Activated naive CD4-positive, alpha-beta T cell treated with anti-CD3 and anti-CD28 coated beads for 36 hours (primary cell): ENCODE measurements at regions of chr12 and their contacts with region 1.

Region 1: DNA sequence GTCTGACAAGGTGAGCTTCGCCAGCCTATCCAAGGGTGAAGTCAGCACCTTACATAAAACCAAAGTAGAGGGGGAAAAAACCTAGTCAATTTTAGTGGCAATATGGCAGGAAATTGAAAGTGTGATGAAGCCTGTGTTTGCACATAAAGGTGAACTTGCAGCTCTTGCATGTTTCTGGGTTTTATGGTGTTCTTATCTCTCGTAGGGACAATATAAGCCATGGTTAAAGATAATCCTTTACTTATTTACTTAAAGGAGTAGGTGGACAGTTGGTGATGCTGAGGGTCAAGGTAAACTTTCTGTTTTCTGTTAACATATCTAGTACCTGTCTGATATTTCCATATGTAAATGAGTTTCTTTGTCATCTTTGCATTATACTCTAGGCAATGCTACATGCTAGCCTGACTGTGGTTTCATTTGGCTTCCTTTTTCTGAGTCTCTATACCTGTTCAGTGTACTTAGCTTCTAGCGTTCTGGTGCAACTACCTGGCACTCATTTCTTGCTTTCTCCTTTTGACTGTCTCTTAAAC is 32.8 kb downstream of the CCDC91 start:
- DNase-seq: peak; percentile 52
- H3K4me3 Mint-ChIP-seq: peak overlapping the region; percentile 48
- H3K27ac Mint-ChIP-seq: peak overlapping the region; percentile 87
- H3K4me1 Mint-ChIP-seq: peaks cover 56% of the 10 kb centered on the region
- H3K27me3 Mint-ChIP-seq: no peaks in the 10 kb centered on the region

Region 2: DNA sequence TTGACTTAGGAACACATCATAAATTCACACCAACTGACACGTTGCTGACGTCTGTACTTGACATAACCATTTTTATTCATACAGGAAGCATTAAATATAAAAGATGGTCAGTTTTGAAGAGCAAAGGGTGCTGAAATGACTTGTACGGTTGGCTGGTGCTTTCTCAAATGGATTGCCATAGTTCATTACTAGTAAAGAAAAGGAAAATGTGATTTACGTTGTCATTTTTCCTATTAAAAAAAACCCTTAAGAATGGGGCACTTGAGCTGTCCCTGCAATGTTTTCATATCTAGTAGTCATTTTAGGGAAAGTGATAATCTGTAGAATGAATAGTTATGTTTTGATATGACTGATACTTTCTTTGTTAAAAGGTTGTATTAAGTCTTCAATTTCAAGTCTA is 420.6 kb before region 1 on chr12:
- CTCF ChIA-PET with region 1: no interaction called
- intact Hi-C with region 1: loop called (anchors 1 kb)
- DNase-seq: peak; percentile 49
- H3K4me3 Mint-ChIP-seq: no peak overlapping the region
- H3K27ac Mint-ChIP-seq: peak overlapping the region; percentile 85
- H3K4me1 Mint-ChIP-seq: peaks cover 59% of the 10 kb centered on the region
- H3K27me3 Mint-ChIP-seq: peaks cover 4% of the 10 kb centered on the region

Region 3: DNA sequence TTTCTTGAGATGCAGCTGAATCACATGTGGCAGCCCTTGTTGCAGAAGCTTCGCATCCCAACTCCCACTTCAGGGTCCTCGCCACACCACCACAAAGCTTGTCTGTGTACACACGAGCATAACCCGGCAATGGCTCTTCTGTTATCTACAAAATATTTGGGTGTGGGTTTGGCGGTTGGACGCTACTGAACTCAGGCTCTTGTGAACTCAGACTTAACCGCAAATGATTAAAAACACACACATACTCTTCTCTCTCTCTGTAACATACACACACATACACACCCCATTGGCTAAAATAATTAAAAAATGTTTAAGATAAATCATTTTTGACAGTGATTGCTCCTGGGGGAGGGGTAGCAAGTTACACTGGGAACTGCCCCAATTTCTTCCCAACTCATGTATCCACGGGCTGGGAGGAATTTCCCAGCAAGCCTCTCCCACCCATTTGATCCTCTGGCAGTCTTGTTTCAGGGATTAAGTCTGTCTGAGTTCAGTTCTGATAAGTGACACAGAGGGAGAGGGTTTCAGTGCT is 379.3 kb before region 1 on chr12:
- CTCF ChIA-PET with region 1: no interaction called
- intact Hi-C with region 1: no loop called
- DNase-seq: no peak
- H3K4me3 Mint-ChIP-seq: no peak overlapping the region
- H3K27ac Mint-ChIP-seq: no peak overlapping the region
- H3K4me1 Mint-ChIP-seq: no peaks in the 10 kb centered on the region
- H3K27me3 Mint-ChIP-seq: peaks cover 5% of the 10 kb centered on the region

Region 4: DNA sequence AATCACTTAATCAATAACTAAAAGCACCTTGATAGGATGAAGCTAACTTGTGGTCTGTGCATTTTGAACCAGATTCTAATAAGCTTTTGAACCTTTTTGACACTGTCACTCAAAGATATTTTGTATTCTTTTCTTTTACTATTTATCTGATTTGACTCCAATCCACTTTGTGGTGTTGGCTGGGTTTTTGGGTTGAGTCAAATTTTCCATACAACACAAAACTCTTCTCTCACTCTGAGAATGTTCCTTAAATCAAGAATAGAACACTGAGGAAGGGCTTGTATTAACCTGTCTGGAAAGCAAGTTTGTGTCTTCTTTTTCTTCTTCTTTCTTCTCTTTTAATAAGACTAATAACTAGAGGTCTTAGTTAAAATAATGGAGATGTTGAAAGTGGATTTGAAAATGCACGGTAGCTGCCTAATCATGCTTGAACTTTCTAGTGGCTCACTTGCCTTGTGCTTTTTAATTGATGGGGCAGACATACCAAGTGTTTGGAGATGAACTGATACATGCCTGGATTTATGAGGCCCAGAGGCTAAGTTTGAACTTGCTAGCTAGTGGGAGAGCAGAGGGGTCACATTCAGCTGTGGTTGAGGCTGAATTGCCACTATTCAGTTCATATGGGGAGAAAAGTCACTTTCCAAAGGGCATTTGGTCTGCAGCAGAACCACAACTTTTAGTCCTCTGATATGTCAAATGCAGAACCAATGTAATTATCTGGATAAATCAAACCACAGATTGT is 157.0 kb before region 1 on chr12:
- CTCF ChIA-PET with region 1: no interaction called
- intact Hi-C with region 1: loop called (anchors 2 kb)
- DNase-seq: peak; percentile 17
- H3K4me3 Mint-ChIP-seq: no peak overlapping the region
- H3K27ac Mint-ChIP-seq: no peak overlapping the region
- H3K4me1 Mint-ChIP-seq: peaks cover 18% of the 10 kb centered on the region
- H3K27me3 Mint-ChIP-seq: peaks cover 6% of the 10 kb centered on the region

Region 5: GRCh38 chr12:28079539-28079938 is 143.6 kb before region 1 on chr12:
- CTCF ChIA-PET with region 1: no interaction called
- intact Hi-C with region 1: loop called (anchors 1 kb)
- DNase-seq: no peak
- H3K4me3 Mint-ChIP-seq: no peak overlapping the region
- H3K27ac Mint-ChIP-seq: no peak overlapping the region
- H3K4me1 Mint-ChIP-seq: peaks cover 8% of the 10 kb centered on the region
- H3K27me3 Mint-ChIP-seq: peaks cover 8% of the 10 kb centered on the region

Region 6: GRCh38 chr12:28177461-28177860 is 45.6 kb before region 1 on chr12:
- CTCF ChIA-PET with region 1: no interaction called
- intact Hi-C with region 1: no loop called
- DNase-seq: no peak
- H3K4me3 Mint-ChIP-seq: no peak overlapping the region
- H3K27ac Mint-ChIP-seq: no peak overlapping the region
- H3K4me1 Mint-ChIP-seq: no peaks in the 10 kb centered on the region
- H3K27me3 Mint-ChIP-seq: no peaks in the 10 kb centered on the region

Region 7: DNA sequence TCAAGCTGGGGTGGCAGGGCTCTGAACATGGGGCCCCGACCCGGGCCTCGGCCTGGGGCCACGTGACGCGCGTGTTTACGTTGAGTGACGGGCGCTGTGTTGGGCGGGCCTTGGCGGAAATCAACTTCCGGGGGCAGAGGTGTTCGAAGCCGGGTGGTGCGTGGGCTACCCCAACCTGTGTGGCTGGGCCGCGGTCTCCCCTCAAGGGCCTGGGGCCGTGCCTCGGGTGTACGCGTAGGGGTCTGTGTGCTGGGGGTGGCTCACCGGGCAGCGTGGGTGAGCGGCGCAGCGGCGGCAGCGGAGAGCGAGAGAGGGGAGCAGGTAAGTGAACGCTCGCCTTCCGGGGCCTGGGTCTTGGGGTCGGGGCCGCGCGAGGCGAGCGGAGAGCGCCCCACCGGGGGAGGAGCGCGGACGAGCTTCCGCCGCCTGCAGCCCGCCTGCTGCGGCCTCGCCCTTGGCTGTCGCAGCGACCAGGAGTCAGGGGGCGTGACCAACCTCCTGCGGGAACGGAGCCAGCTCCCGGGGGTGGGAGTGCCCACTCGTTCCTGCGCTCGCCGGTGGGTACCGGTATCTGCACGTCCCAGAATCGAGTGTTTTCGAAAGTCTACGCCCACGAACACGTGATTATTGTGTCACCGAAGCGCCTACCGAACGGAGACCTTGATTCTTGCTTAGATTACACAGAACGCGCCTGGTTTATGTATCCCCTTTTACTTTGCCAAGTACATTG is 32.6 kb before region 1 on chr12 and contains the start of gene CCDC91:
- CTCF ChIA-PET with region 1: interaction called, 3 read pairs
- intact Hi-C with region 1: loop called (anchors 1 kb)
- DNase-seq: peak; percentile 91
- H3K4me3 Mint-ChIP-seq: peak within 1 kb of the TSS; percentile 96
- H3K27ac Mint-ChIP-seq: peak within 1 kb of the TSS; percentile 97
- H3K4me1 Mint-ChIP-seq: peaks cover 57% of the 10 kb centered on the region
- H3K27me3 Mint-ChIP-seq: no peaks in the 10 kb centered on the region
- total RNA-seq, gene CCDC91: 15.3 to 16.1 TPM

Region 8: GRCh38 chr12:28209782-28210181 is 13.3 kb before region 1 on chr12:
- CTCF ChIA-PET with region 1: no interaction called
- intact Hi-C with region 1: no loop called
- DNase-seq: no peak
- H3K4me3 Mint-ChIP-seq: no peak overlapping the region
- H3K27ac Mint-ChIP-seq: no peak overlapping the region
- H3K4me1 Mint-ChIP-seq: peaks cover 14% of the 10 kb centered on the region
- H3K27me3 Mint-ChIP-seq: no peaks in the 10 kb centered on the region

Region 9: GRCh38 chr12:28497889-28498411 is 274.9 kb after region 1 on chr12:
- CTCF ChIA-PET with region 1: no interaction called
- intact Hi-C with region 1: loop called (anchors 1 kb)
- DNase-seq: peak; percentile 10
- H3K4me3 Mint-ChIP-seq: no peak overlapping the region
- H3K27ac Mint-ChIP-seq: peak overlapping the region; percentile 46
- H3K4me1 Mint-ChIP-seq: peaks cover 18% of the 10 kb centered on the region
- H3K27me3 Mint-ChIP-seq: no peaks in the 10 kb centered on the region